Mammary epithelial cell (primary cell): ENCODE measurements at regions of chrX and their contacts with region 1.

Region 1: GRCh38 chrX:38327007-38327774 is at the start of gene RPGR:
- DNase-seq: peak; percentile 87
- H3K4me3 ChIP-seq: peak within 1 kb of the TSS; percentile 62 to 74 (median 63)
- H3K27ac ChIP-seq: peak within 1 kb of the TSS; percentile 88
- H3K4me1 ChIP-seq: no peaks in the 10 kb centered on the region
- H3K27me3 ChIP-seq: no peaks in the 10 kb centered on the region
- CTCF ChIP-seq: peak; percentile 49 to 83
- total RNA-seq, gene RPGR: 7.8 to 11.3 TPM

Region 2: GRCh38 chrX:38052096-38052495 is 275.1 kb before region 1 on chrX:
- CTCF ChIA-PET with region 1: no interaction called
- dilution Hi-C with region 1: no loop called
- in situ Hi-C with region 1: no loop called
- intact Hi-C with region 1: no loop called
- DNase-seq: peak; percentile 86
- H3K4me3 ChIP-seq: no peak overlapping the region
- H3K27ac ChIP-seq: no peak overlapping the region
- H3K4me1 ChIP-seq: peaks cover 14% of the 10 kb centered on the region
- H3K27me3 ChIP-seq: no peaks in the 10 kb centered on the region
- CTCF ChIP-seq: no peak

Region 3: GRCh38 chrX:38192007-38192810 is 135.0 kb before region 1 on chrX:
- CTCF ChIA-PET with region 1: no interaction called
- dilution Hi-C with region 1: no loop called
- in situ Hi-C with region 1: no loop called
- intact Hi-C with region 1: loop called (anchors 1 kb)
- DNase-seq: no peak
- H3K4me3 ChIP-seq: no peak overlapping the region
- H3K27ac ChIP-seq: no peak overlapping the region
- H3K4me1 ChIP-seq: peaks cover 10% of the 10 kb centered on the region
- H3K27me3 ChIP-seq: no peaks in the 10 kb centered on the region
- CTCF ChIP-seq: peak; percentile 57 to 67

Region 4: DNA sequence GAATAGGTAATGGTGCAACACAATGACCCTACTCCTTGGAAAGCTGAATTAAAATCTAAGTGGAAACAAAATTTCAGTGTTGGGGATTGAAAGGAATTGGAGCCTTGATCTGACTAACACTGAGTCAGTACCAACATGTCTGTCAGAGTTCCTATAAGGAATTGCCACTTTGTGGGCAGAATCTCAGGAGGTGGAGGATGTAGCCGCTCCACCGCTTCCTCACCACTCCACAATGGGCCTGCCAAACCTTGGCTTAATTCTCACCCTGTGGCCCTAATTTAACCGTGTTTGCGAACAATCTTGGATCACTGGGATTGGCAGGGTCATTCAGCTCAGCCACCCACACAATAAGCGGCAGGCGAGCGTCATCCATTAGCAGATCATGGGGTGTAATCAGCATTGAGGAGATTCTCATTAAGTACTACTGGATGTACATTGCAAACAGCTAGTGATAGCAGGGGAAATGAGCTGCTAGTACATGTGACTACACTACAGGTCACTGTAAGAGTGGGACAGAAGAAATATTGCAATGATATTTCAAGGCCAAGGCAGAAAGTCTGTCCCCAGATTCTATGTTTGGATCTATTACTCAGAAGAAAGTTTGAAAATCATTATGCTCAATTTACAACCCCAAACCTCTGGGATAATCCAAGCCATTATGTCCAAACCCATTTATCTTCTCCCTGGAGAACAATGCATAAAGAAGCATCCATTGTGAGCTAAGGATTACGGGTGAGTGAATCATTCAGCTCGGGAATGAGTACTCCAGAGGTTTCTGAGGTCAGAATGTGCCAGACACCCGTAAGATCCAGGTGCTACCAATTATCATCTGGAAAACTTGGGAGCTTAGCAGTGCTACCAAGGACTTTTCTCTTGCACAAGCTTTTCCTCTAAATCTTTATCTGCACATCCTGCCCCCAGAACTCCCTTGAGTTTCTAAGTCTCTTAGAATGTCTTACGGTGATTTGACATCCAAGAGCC is 112.3 kb before region 1 on chrX:
- CTCF ChIA-PET with region 1: interaction called, 9 read pairs
- dilution Hi-C with region 1: no loop called
- in situ Hi-C with region 1: loop called in 1 of 2 experiments (anchors 10 kb)
- intact Hi-C with region 1: loop called (anchors 1 kb)
- DNase-seq: peak; percentile 76
- H3K4me3 ChIP-seq: no peak overlapping the region
- H3K27ac ChIP-seq: peak overlapping the region; percentile 88
- H3K4me1 ChIP-seq: peaks cover 47% of the 10 kb centered on the region
- H3K27me3 ChIP-seq: no peaks in the 10 kb centered on the region
- CTCF ChIP-seq: no peak

Region 5: GRCh38 chrX:38220024-38220414 is 107.2 kb before region 1 on chrX:
- CTCF ChIA-PET with region 1: interaction called, 9 read pairs
- dilution Hi-C with region 1: no loop called
- in situ Hi-C with region 1: loop called in 1 of 2 experiments (anchors 10 kb)
- intact Hi-C with region 1: loop called (anchors 1 kb)
- DNase-seq: peak; percentile 54
- H3K4me3 ChIP-seq: peak overlapping the region; percentile 55 to 71 (median 65)
- H3K27ac ChIP-seq: peak overlapping the region; percentile 60
- H3K4me1 ChIP-seq: peaks cover 19% of the 10 kb centered on the region
- H3K27me3 ChIP-seq: no peaks in the 10 kb centered on the region
- CTCF ChIP-seq: peak; percentile 20 to 52

Region 6: GRCh38 chrX:38260231-38260630 is 67.0 kb before region 1 on chrX:
- CTCF ChIA-PET with region 1: interaction called, 3 read pairs
- dilution Hi-C with region 1: no loop called
- in situ Hi-C with region 1: no loop called
- intact Hi-C with region 1: loop called (anchors 1 kb)
- DNase-seq: no peak
- H3K4me3 ChIP-seq: no peak overlapping the region
- H3K27ac ChIP-seq: no peak overlapping the region
- H3K4me1 ChIP-seq: no peaks in the 10 kb centered on the region
- H3K27me3 ChIP-seq: peaks cover 2% of the 10 kb centered on the region
- CTCF ChIP-seq: peak; percentile 57 to 71

Region 7: DNA sequence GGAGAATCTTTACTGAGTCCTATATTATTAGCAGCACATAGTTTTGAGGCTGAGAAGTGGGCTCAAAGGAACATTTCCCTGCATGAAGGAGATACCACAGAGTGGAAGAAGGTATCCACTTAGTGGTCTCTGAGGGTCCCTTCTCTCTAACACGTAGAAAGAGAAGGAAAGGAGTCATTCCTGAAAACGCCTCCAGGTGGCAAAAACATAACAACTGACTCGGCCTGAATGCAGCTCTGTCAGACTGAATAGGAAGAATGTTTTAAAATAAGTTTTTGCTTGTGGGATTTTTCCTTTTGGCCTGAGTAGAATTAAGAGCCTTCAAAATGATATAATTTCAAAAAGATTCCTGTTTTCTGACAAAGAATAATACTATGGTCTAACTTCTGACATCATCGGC is 23.2 kb before region 1 on chrX:
- CTCF ChIA-PET with region 1: no interaction called
- dilution Hi-C with region 1: no loop called
- in situ Hi-C with region 1: no loop called
- intact Hi-C with region 1: loop called (anchors 1 kb)
- DNase-seq: no peak
- H3K4me3 ChIP-seq: no peak overlapping the region
- H3K27ac ChIP-seq: no peak overlapping the region
- H3K4me1 ChIP-seq: no peaks in the 10 kb centered on the region
- H3K27me3 ChIP-seq: no peaks in the 10 kb centered on the region
- CTCF ChIP-seq: peak; percentile 24 to 46